GM18951 (cell line): ENCODE measurements at regions of chr10 and their contacts with region 1.

Region 1: GRCh38 chr10:96306516-96306915 is 2.3 kb downstream of the DNTT start:
- POLR2A ChIP-seq: no peak

Region 2: GRCh38 chr10:96043033-96043932 is 263.2 kb before region 1 on chr10 and contains the start of gene CCNJ:
- in situ Hi-C with region 1: loop called (anchors 25 kb)
- POLR2A ChIP-seq: peak; percentile 85